Activated CD4-positive, alpha-beta T cell treated with anti-CD3 and anti-CD28 coated beads for 36 hours (primary cell): ENCODE measurements at regions of chr4 and their contacts with region 1.

Region 1: DNA sequence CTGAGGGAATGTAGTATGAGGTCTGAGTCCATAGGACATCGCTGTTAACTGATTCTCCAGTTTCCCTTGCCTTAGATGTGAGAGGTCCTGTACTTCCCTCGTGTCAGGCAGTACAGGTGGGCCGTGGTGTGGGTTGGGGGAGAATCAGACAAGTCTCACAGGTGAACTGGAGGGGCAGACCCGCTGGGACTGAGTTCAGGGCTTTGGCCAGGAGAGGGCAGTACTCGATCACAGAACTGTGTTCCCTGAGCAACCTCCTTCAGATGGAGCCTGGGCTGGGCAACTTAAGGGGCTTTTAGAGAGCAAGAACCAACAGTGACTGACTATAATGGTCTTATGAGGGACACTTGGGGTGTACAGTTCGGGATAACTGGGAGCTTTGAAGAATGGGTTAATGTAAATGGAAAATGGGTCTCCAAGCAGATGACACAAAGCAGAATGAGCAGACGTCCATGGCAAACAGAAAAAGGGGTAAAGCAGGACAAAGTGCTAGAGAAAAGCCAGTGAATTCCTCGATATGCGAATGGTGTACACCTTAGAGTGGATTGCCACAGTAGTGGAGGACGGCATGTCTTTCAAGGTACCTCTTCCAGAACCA is 83.6 kb downstream of the CCNG2 start:
- DNase-seq: peak; percentile 86
- ATAC-seq: peak; percentile 81
- H3K4me3 Mint-ChIP-seq: no peak overlapping the region
- H3K27ac Mint-ChIP-seq: no peak overlapping the region
- H3K4me1 Mint-ChIP-seq: no peaks in the 10 kb centered on the region
- H3K27me3 Mint-ChIP-seq: peaks cover 8% of the 10 kb centered on the region

Region 2: GRCh38 chr4:77308843-77309242 is 68.3 kb after region 1 on chr4:
- CTCF ChIA-PET with region 1: interaction called, 20 read pairs
- POLR2A ChIA-PET with region 1: no interaction called
- intact Hi-C with region 1: loop called (anchors 1 kb)
- DNase-seq: no peak
- ATAC-seq: no peak
- H3K4me3 Mint-ChIP-seq: no peak overlapping the region
- H3K27ac Mint-ChIP-seq: no peak overlapping the region
- H3K4me1 Mint-ChIP-seq: no peaks in the 10 kb centered on the region
- H3K27me3 Mint-ChIP-seq: peaks cover 2% of the 10 kb centered on the region

Region 3: GRCh38 chr4:77358315-77358928 is 117.9 kb after region 1 on chr4:
- CTCF ChIA-PET with region 1: interaction called, 59 read pairs
- POLR2A ChIA-PET with region 1: no interaction called
- intact Hi-C with region 1: loop called (anchors 1 kb)
- DNase-seq: peak; percentile 10
- ATAC-seq: peak; percentile 42
- H3K4me3 Mint-ChIP-seq: no peak overlapping the region
- H3K27ac Mint-ChIP-seq: no peak overlapping the region
- H3K4me1 Mint-ChIP-seq: no peaks in the 10 kb centered on the region
- H3K27me3 Mint-ChIP-seq: no peaks in the 10 kb centered on the region

Region 4: DNA sequence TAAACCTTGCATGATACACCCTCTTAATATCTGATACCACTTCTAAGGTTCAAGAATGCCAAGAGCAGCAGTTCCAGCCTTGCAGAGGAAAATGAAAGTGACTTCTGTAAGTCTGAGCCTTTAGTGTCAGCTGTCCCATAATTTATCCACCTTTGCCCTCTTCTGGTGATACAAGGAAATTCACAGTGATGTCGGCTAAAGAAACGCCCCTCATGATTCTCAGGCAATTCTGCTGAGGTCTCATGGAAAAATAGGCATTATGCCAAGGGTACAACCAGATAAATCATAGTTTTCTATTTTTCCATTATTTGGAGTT is 192.8 kb after region 1 on chr4:
- CTCF ChIA-PET with region 1: interaction called, 3 read pairs
- POLR2A ChIA-PET with region 1: no interaction called
- intact Hi-C with region 1: loop called (anchors 1 to 2 kb)
- DNase-seq: peak; percentile 13
- ATAC-seq: peak; percentile 89
- H3K4me3 Mint-ChIP-seq: no peak overlapping the region
- H3K27ac Mint-ChIP-seq: no peak overlapping the region
- H3K4me1 Mint-ChIP-seq: peaks cover 9% of the 10 kb centered on the region
- H3K27me3 Mint-ChIP-seq: no peaks in the 10 kb centered on the region